ENCODE measurements at regions of chr3 and their contacts with region 1.

Region 1: GRCh38 chr3:133506215-133506901 is 67.1 kb upstream of the CDV3 start:
- DNase-seq: peak; percentile 46
- H3K4me3 Mint-ChIP-seq: peak overlapping the region; percentile 67
- H3K27ac Mint-ChIP-seq: peak overlapping the region; percentile 77
- H3K4me1 Mint-ChIP-seq: peaks cover 15% of the 10 kb centered on the region
- H3K27me3 Mint-ChIP-seq: no peaks in the 10 kb centered on the region

Region 2: GRCh38 chr3:133441867-133442270 is 64.5 kb before region 1 on chr3:
- CTCF ChIA-PET with region 1: no interaction called
- POLR2A ChIA-PET with region 1: no interaction called
- intact Hi-C with region 1: loop called (anchors 1 kb)
- DNase-seq: peak; percentile 43
- H3K4me3 Mint-ChIP-seq: peak overlapping the region; percentile 48
- H3K27ac Mint-ChIP-seq: peak overlapping the region; percentile 47
- H3K4me1 Mint-ChIP-seq: peaks cover 35% of the 10 kb centered on the region
- H3K27me3 Mint-ChIP-seq: no peaks in the 10 kb centered on the region

Region 3: GRCh38 chr3:133464573-133464972 is 41.8 kb before region 1 on chr3:
- CTCF ChIA-PET with region 1: no interaction called
- POLR2A ChIA-PET with region 1: no interaction called
- intact Hi-C with region 1: loop called (anchors 5 kb)
- DNase-seq: no peak
- H3K4me3 Mint-ChIP-seq: no peak overlapping the region
- H3K27ac Mint-ChIP-seq: no peak overlapping the region
- H3K4me1 Mint-ChIP-seq: peaks cover 26% of the 10 kb centered on the region
- H3K27me3 Mint-ChIP-seq: no peaks in the 10 kb centered on the region

Region 4: DNA sequence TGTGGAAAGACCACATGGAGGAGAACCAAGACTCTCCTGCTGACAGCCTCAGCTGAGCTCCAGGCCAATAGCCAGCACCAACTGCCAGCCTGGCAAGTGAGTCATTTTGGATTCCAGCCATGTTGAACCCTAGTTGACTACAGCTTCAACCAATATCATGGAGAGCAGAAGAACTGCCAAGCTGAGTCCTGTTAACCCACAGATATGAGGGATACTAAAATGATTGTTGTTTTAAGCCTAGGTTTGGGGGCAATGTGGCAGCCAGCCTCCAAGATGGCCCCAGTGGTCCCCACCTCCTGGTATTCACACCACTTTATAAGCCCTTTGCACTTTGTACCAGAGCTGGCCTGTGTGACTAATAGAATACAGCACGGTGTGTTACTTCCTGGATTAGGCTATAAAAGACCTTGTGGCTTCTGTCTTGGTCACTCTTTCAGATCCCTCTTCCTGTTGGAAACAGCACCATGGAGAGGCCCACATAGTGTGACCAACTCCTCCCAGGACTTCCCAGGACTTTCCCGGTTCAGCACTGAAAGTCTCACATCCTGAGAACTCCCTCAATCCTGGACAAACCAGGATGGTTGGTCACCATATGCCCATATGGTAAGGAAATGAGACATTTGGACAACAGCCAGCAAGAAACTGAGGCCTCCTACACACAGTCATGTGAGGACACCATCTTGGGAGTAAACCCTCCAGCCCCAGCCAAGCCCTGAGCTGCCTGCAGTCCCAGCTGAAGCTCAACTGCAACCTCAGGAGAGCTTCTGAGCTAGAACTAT is 34.7 kb after region 1 on chr3:
- CTCF ChIA-PET with region 1: no interaction called
- POLR2A ChIA-PET with region 1: no interaction called
- intact Hi-C with region 1: no loop called
- DNase-seq: no peak
- H3K4me3 Mint-ChIP-seq: no peak overlapping the region
- H3K27ac Mint-ChIP-seq: no peak overlapping the region
- H3K4me1 Mint-ChIP-seq: no peaks in the 10 kb centered on the region
- H3K27me3 Mint-ChIP-seq: no peaks in the 10 kb centered on the region